ENCODE measurements at regions of chr13 and their contacts with region 1.

Region 1: DNA sequence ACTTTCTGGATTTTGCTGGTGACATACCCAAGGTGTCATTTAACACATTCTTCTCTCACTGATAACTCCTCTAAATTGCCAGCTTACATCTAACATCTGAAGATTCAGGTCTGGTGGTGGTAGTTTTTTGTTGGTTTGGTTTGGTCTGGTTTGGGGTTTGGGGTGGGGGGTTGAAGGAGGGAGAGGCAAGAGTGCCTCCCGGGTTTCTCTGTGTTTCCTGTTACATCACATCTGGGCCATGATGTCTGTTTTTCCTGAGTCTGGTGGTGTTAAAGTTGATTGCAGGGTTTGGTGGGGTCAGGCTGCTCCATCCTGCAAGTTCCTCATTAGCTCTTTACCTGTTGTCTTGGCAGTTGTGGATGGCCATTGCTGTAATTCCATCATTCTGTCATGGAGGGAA is 155.8 kb upstream of the UBL3 start:
- DNase-seq: no peak
- H3K4me3 ChIP-seq: no peak overlapping the region
- H3K27ac ChIP-seq: no peak overlapping the region
- H3K4me1 ChIP-seq: no peaks in the 10 kb centered on the region
- H3K27me3 ChIP-seq: no peaks in the 10 kb centered on the region
- CTCF ChIP-seq: no peak

Region 2: GRCh38 chr13:30457306-30457891 is 451.2 kb after region 1 on chr13:
- intact Hi-C with region 1: loop called (anchors 5 kb)
- DNase-seq: no peak
- H3K4me3 ChIP-seq: no peak overlapping the region
- H3K27ac ChIP-seq: peak overlapping the region in 1 of 2 donors; percentile 55
- H3K4me1 ChIP-seq: peaks cover 0 to 23% (median 10%) of the 10 kb centered on the region in 4 donors
- H3K27me3 ChIP-seq: no peaks in the 10 kb centered on the region
- CTCF ChIP-seq: no peak